ENCODE measurements at regions of chr9 and their contacts with region 1.

Region 1: DNA sequence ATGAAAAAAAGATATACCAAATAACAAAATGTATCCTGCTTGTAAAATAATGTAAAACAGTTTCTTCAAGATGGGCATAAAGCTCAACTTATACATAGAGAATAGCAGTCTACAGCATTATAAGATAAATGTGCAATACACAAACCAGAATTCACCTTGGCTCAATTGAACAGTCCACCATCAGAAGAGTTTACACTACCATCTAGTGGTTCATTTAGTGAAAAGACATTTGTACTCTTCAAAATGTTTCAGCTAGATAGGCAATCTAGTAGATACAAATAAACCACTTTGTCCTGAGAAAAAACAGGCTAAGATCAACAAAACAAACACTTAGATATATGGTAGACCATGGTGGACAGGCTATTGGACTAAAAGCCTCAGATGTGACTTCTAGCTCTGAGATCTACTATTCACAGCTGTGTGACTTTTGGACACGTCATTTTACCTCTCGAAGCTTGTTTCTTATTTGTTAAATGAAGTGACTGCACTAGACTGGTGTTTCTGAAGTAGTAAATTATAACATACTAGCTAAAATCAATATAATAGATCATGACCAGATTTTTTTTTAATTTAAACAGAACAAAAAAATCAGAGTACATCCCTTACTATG is 22.1 kb upstream of the TPD52L3 start:
- DNase-seq: no peak
- H3K4me3 Mint-ChIP-seq: no peak overlapping the region
- H3K27ac Mint-ChIP-seq: no peak overlapping the region
- H3K4me1 Mint-ChIP-seq: peaks cover 8% of the 10 kb centered on the region
- H3K27me3 Mint-ChIP-seq: no peaks in the 10 kb centered on the region
- CTCF ChIP-seq: peak; percentile 23

Region 2: DNA sequence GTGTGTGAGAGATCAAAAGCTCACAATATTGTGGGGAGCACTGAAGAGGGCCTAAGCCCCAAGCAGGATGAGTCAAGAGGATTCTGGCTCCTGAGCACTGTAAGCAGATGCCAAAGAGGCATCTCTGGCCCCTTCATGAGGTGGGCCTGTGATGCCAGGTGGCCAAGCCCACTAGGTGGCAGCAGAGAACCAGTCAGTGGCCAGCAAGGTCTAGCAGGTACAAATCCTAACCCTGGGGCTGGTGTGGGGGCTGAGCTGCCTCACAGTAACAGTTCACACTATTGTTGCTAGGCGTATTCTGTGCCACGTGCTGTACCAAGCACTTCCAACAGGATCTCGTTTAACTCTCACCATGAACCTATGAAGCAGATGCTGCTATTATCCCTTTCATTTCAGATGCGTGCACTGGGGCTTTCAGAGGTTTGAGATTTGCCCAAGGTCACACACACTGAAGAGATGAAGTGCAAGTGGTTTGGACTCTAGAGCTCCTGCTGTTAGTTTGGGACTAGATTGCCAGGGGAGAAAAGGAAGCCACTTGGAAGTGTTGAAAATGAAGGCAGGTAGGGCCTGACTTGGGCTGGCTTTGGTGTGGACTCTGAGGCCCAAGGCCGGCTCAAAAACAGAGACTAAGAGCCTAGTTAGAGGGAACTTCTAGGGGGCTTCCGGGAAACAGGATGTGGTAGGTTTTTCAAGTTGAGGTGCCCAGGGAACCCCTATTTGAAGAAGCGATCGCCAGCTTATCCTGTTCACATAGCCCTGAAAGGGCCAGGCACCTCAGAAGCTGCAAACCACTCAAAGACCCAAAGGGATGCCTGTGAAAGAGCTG is 419.7 kb before region 1 on chr9:
- CTCF ChIA-PET with region 1: interaction called, 3 read pairs
- intact Hi-C with region 1: loop called (anchors 2 kb)
- DNase-seq: peak; percentile 82
- H3K4me3 Mint-ChIP-seq: no peak overlapping the region
- H3K27ac Mint-ChIP-seq: no peak overlapping the region
- H3K4me1 Mint-ChIP-seq: peaks cover 9% of the 10 kb centered on the region
- H3K27me3 Mint-ChIP-seq: no peaks in the 10 kb centered on the region
- CTCF ChIP-seq: peak; percentile 82

Region 3: GRCh38 chr9:6153425-6153824 is 152.6 kb before region 1 on chr9:
- CTCF ChIA-PET with region 1: no interaction called
- intact Hi-C with region 1: loop called (anchors 5 kb)
- DNase-seq: no peak
- H3K4me3 Mint-ChIP-seq: peak overlapping the region; percentile 46
- H3K27ac Mint-ChIP-seq: peak overlapping the region; percentile 88
- H3K4me1 Mint-ChIP-seq: peaks cover 40% of the 10 kb centered on the region
- H3K27me3 Mint-ChIP-seq: no peaks in the 10 kb centered on the region
- CTCF ChIP-seq: no peak

Region 4: DNA sequence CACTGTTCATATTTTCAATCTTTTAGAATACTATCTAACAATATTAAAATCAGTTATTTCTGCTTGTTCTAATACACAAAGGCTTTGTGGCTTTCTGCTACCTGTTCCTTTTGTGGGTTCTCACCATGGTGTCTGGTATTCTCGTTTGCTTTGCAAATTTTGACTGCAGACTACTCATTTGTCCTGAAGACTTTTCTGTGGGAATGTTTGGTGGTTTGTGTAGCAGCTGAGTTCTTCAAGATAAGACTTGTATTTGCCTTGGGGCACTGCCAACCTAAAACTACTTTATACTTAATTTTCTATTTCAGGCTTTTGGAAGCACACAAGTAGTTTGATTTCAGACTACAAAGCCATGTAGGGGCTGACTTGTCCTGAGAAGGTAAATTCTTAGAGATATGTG is 79.4 kb before region 1 on chr9:
- CTCF ChIA-PET with region 1: no interaction called
- intact Hi-C with region 1: loop called (anchors 10 kb)
- DNase-seq: no peak
- H3K4me3 Mint-ChIP-seq: no peak overlapping the region
- H3K27ac Mint-ChIP-seq: no peak overlapping the region
- H3K4me1 Mint-ChIP-seq: no peaks in the 10 kb centered on the region
- H3K27me3 Mint-ChIP-seq: no peaks in the 10 kb centered on the region
- CTCF ChIP-seq: no peak

Region 5: GRCh38 chr9:6353851-6354686 is 48.0 kb after region 1 on chr9:
- CTCF ChIA-PET with region 1: no interaction called
- intact Hi-C with region 1: no loop called
- DNase-seq: peak; percentile 21
- H3K4me3 Mint-ChIP-seq: no peak overlapping the region
- H3K27ac Mint-ChIP-seq: no peak overlapping the region
- H3K4me1 Mint-ChIP-seq: no peaks in the 10 kb centered on the region
- H3K27me3 Mint-ChIP-seq: no peaks in the 10 kb centered on the region
- CTCF ChIP-seq: peak; percentile 52